Transverse colon (tissue), 4 donors: ENCODE measurements at regions of chr3 and their contacts with region 1.

Region 1: DNA sequence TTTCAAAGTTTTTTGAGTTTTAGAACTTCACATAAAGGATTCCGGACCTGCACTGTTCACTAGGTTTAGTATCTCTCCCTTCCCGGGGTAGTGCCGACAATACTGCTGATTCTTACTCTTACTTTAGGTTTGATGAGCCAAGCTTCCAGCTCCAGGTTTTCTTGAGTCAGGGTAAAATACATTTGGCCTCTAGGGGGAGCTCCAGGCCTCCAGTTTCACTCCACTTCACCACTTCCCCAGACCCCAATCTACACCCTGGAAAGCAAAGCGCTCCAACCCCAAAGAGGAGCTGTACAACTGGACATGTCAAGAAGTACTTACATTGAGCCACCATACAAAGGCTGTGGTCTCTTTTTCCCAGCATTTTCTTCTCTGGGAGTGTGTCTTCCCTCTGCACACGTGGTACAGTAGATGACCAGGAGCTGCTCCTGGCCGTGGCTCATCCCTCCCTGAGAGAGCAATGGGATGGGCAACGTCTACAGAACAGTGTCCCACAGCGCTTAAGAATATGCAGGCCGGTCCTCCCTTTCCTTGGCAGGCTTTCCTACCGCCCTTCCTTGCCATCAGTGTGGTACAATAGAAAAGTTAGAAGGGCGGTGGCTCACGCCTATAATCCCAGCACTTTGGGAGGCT is 93.9 kb upstream of the CCDC80 start:
- DNase-seq: peak; percentile 52
- H3K4me3 ChIP-seq: no peak overlapping the region
- H3K27ac ChIP-seq: no peak overlapping the region
- H3K4me1 ChIP-seq: peaks cover 0 to 5% (median 0%) of the 10 kb centered on the region in 4 donors
- H3K27me3 ChIP-seq: no peaks in the 10 kb centered on the region
- CTCF ChIP-seq: peak; percentile 63 to 77 (median 71)
- EP300 ChIP-seq: no peak
- POLR2A ChIP-seq: no peak

Region 2: DNA sequence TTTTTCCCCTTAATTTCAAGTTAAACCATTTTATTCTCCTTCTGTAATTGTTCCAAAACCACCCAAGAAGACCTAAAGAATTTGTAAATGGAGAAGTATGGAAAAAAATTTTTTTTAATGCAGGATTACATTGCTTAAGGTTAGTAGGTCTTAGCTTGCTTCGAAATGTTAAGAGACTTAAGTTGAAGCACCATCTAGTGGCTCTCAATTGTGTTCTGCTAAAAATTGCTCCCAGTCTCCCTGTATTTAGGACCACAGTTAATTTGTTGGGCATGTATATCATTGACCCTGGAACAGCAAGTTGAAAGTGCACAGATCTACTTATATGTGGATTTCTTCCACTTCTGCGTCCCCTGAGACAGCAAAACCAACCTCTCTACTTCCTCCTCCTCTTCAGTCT is 79.4 kb after region 1 on chr3:
- in situ Hi-C with region 1: no loop called
- intact Hi-C with region 1: loop called (anchors 10 kb)
- DNase-seq: no peak
- H3K4me3 ChIP-seq: no peak overlapping the region
- H3K27ac ChIP-seq: peak overlapping the region in 2 of 4 donors; percentile 68
- H3K4me1 ChIP-seq: peaks cover 3 to 30% (median 10%) of the 10 kb centered on the region in 4 donors
- H3K27me3 ChIP-seq: no peaks in the 10 kb centered on the region
- CTCF ChIP-seq: peak; percentile 9 to 33 (median 30)
- EP300 ChIP-seq: no peak
- POLR2A ChIP-seq: no peak

Region 3: GRCh38 chr3:112979240-112979832 is 244.5 kb after region 1 on chr3:
- in situ Hi-C with region 1: loop called in 3 of 4 experiments (anchors 10 kb)
- intact Hi-C with region 1: loop called (anchors 10 kb)
- DNase-seq: no peak
- H3K4me3 ChIP-seq: no peak overlapping the region
- H3K27ac ChIP-seq: no peak overlapping the region
- H3K4me1 ChIP-seq: peaks cover 0 to 4% (median 0%) of the 10 kb centered on the region in 4 donors
- H3K27me3 ChIP-seq: no peaks in the 10 kb centered on the region
- CTCF ChIP-seq: peak; percentile 63 to 73 (median 72)
- EP300 ChIP-seq: no peak
- POLR2A ChIP-seq: no peak

Region 4: DNA sequence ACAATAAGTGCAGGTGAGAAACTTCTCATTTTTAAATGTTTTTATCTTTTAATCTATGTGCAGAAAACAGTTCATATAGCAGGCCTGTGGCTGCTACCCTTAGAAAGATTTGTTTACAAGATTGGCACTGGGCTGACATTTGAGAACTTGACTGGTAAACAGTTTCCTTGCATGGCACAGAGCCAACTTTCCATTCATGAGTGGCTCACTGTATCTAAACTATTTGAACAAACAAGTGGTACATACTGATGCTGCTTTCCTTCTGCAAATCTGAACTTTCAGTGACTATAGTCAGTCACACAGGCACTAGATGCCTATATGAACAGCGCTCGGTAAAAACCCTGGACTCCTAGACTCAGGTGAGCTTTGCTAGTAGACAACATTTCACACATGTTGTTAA is 249.7 kb after region 1 on chr3:
- in situ Hi-C with region 1: loop called in 3 of 4 experiments (anchors 10 kb)
- intact Hi-C with region 1: loop called (anchors 10 kb)
- DNase-seq: peak; percentile 31
- H3K4me3 ChIP-seq: no peak overlapping the region
- H3K27ac ChIP-seq: no peak overlapping the region
- H3K4me1 ChIP-seq: no peaks in the 10 kb centered on the region
- H3K27me3 ChIP-seq: no peaks in the 10 kb centered on the region
- CTCF ChIP-seq: no peak
- EP300 ChIP-seq: no peak
- POLR2A ChIP-seq: no peak